ENCODE measurements at regions of chr10 and their contacts with region 1.

Region 1: DNA sequence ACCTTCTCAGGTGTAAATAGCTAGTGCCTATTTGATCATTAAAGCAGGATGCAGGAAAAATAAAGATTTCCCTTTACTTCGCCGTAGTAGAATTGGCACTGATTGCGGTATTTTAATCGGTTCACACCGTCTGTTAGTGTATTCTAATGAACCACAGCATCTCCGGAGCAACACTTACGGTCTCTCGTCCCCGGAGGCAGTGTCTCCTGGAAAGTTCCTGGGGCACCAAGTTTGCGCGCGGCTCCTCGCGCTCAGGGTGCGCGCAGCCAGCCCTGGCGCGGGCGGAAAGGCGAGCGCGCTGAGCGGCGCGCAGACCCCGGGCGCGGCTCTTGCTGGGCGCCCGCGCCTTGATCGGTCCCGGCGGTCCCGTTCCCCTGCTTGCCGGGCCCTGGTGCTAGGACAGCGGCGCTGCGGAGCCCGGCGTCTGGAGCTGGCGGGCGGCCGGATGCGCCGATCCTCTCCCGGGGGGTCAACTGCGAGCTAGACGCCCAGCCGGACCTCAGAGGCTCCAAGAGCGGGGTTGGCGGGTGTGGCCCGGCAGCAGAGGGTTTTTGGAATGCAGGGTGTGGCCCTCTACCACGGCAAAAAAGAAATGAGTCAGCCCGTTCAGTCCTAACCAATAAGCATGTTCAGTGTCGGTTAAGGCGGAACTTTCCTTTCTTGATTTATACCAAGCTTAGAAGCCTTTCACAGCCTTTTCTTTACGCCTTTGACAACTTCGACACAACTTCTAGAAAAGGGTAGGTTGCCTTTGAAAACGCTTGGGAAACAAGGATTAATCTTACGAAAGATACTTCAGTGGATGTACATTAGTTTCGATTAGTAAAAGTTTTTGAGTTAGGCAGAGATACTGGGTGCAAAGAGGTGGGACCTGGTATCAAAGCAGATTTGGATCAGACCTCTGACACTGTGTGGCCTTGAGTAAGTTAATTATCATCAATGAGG is 166.8 kb upstream of the ASAH2 start:
- H3K4me3 Mint-ChIP-seq: peak overlapping the region; percentile 80
- H3K27ac Mint-ChIP-seq: peak overlapping the region; percentile 89
- H3K4me1 Mint-ChIP-seq: peaks cover 62% of the 10 kb centered on the region
- H3K27me3 Mint-ChIP-seq: no peaks in the 10 kb centered on the region

Region 2: GRCh38 chr10:50325449-50326171 is 92.5 kb before region 1 on chr10:
- intact Hi-C with region 1: loop called (anchors 5 kb)
- H3K4me3 Mint-ChIP-seq: no peak overlapping the region
- H3K27ac Mint-ChIP-seq: peak overlapping the region; percentile 53
- H3K4me1 Mint-ChIP-seq: peaks cover 65% of the 10 kb centered on the region
- H3K27me3 Mint-ChIP-seq: no peaks in the 10 kb centered on the region

Region 3: GRCh38 chr10:50347394-50347802 is 70.8 kb before region 1 on chr10:
- intact Hi-C with region 1: no loop called
- H3K4me3 Mint-ChIP-seq: no peak overlapping the region
- H3K27ac Mint-ChIP-seq: no peak overlapping the region
- H3K4me1 Mint-ChIP-seq: peaks cover 37% of the 10 kb centered on the region
- H3K27me3 Mint-ChIP-seq: no peaks in the 10 kb centered on the region

Region 4: GRCh38 chr10:50396491-50397311 is 21.5 kb before region 1 on chr10:
- intact Hi-C with region 1: loop called (anchors 2 kb)
- H3K4me3 Mint-ChIP-seq: peak overlapping the region; percentile 53
- H3K27ac Mint-ChIP-seq: peak overlapping the region; percentile 81
- H3K4me1 Mint-ChIP-seq: peaks cover 64% of the 10 kb centered on the region
- H3K27me3 Mint-ChIP-seq: no peaks in the 10 kb centered on the region

Region 5: DNA sequence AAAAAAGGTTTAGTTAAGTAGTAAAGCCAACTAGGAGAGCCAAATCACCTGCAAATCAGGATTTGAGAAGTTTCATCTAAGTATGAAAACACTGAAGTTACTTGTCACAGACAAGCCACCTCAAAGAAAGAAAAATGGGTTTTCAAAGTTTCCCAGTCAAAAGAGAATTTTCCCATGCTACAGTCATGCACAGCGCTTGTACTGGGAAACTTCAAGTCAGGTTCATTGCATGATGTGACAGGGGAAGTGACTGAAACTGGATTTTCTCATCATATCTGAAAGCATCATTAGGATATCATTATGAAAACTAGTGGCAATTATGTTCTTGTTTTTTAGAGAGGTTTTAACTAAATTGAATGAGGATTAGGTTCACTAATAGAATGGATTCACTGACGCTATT is 38.6 kb after region 1 on chr10:
- intact Hi-C with region 1: loop called (anchors 5 kb)
- H3K4me3 Mint-ChIP-seq: no peak overlapping the region
- H3K27ac Mint-ChIP-seq: no peak overlapping the region
- H3K4me1 Mint-ChIP-seq: peaks cover 44% of the 10 kb centered on the region
- H3K27me3 Mint-ChIP-seq: no peaks in the 10 kb centered on the region

Region 6: GRCh38 chr10:50624866-50625692 is 206.9 kb after region 1 on chr10:
- intact Hi-C with region 1: loop called (anchors 2 kb)
- H3K4me3 Mint-ChIP-seq: peak overlapping the region; percentile 75
- H3K27ac Mint-ChIP-seq: peak overlapping the region; percentile 97
- H3K4me1 Mint-ChIP-seq: peaks cover 15% of the 10 kb centered on the region
- H3K27me3 Mint-ChIP-seq: no peaks in the 10 kb centered on the region

Measured in dendritic cell treated with granulocyte-macrophage colony-stimulating factor and Interleukin-4, amounts not matched to agents 40 ng/mL and 50 ng/mL, for 4 days (primary cell).